ENCODE measurements at regions of chr1 and their contacts with region 1.

Region 1: GRCh38 chr1:19762175-19762779 is 37.4 kb downstream of the TMCO4 start:
- DNase-seq: peak; percentile 50
- H3K4me3 Mint-ChIP-seq: no peak overlapping the region
- H3K27ac Mint-ChIP-seq: no peak overlapping the region
- H3K4me1 Mint-ChIP-seq: peaks cover 20% of the 10 kb centered on the region
- H3K27me3 Mint-ChIP-seq: no peaks in the 10 kb centered on the region

Region 2: GRCh38 chr1:19704247-19705113 is 57.8 kb before region 1 on chr1:
- CTCF ChIA-PET with region 1: no interaction called
- POLR2A ChIA-PET with region 1: no interaction called
- intact Hi-C with region 1: no loop called
- DNase-seq: peak; percentile 71
- H3K4me3 Mint-ChIP-seq: no peak overlapping the region
- H3K27ac Mint-ChIP-seq: no peak overlapping the region
- H3K4me1 Mint-ChIP-seq: peaks cover 6% of the 10 kb centered on the region
- H3K27me3 Mint-ChIP-seq: no peaks in the 10 kb centered on the region

Region 3: GRCh38 chr1:19799877-19800804 is 37.9 kb after region 1 on chr1 and contains the start of gene TMCO4:
- CTCF ChIA-PET with region 1: interaction called, 11 read pairs
- POLR2A ChIA-PET with region 1: no interaction called
- intact Hi-C with region 1: loop called (anchors 5 kb)
- DNase-seq: peak; percentile 61
- H3K4me3 Mint-ChIP-seq: peak within 1 kb of the TSS; percentile 79
- H3K27ac Mint-ChIP-seq: peak within 1 kb of the TSS; percentile 87
- H3K4me1 Mint-ChIP-seq: peaks cover 26% of the 10 kb centered on the region
- H3K27me3 Mint-ChIP-seq: no peaks in the 10 kb centered on the region
- total RNA-seq, gene TMCO4: 18.3 to 19.7 TPM

Region 4: DNA sequence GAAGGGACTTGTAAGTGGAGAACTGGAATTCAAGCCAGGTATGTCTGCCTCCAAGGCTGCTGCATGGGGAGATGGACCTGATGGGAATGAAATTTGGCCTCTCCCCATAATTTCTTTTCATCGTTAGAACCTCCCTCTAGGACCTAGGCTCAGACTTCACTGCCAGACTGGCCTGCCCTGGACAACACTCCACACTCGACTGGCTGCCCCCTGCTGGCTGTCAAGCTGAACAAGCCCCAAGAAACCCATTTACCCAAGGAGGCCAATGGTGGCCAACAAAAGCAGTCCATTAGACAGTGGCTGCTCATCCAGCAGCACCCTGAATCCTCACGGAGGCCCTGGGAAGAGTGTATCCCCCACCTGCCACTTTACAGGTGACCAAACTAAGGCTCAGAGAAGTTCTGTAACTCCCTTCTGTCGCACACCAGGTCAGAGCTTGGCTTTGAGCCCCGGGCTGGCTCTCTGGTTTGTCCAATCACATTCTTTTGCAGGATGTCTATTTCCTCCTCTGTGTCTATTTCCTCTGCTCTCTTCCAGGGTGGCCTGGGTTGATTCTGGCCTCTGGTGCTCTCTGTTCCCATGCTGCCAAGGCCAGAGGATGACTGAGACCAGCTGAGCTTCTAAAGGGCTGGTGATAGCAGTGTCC is 49.1 kb after region 1 on chr1:
- CTCF ChIA-PET with region 1: interaction called, 43 read pairs
- POLR2A ChIA-PET with region 1: interaction called, 3 read pairs
- intact Hi-C with region 1: loop called (anchors 1 kb)
- DNase-seq: peak; percentile 77
- H3K4me3 Mint-ChIP-seq: no peak overlapping the region
- H3K27ac Mint-ChIP-seq: no peak overlapping the region
- H3K4me1 Mint-ChIP-seq: no peaks in the 10 kb centered on the region
- H3K27me3 Mint-ChIP-seq: no peaks in the 10 kb centered on the region

Region 5: GRCh38 chr1:19882111-19883071 is 120.1 kb after region 1 on chr1 and contains the start of gene OTUD3:
- CTCF ChIA-PET with region 1: interaction called, 19 read pairs
- POLR2A ChIA-PET with region 1: interaction called, 3 read pairs
- intact Hi-C with region 1: no loop called
- DNase-seq: peak; percentile 97
- H3K4me3 Mint-ChIP-seq: peak within 1 kb of the TSS; percentile 84
- H3K27ac Mint-ChIP-seq: peak within 1 kb of the TSS; percentile 14
- H3K4me1 Mint-ChIP-seq: peaks cover 37% of the 10 kb centered on the region
- H3K27me3 Mint-ChIP-seq: peaks cover 7% of the 10 kb centered on the region
- total RNA-seq, gene OTUD3: 6.9 to 8.4 TPM

Measured in activated CD4-positive, alpha-beta memory T cell treated with anti-CD3 and anti-CD28 coated beads for 36 hours (primary cell).